Mammary epithelial cell (primary cell): ENCODE measurements at regions of chr9 and their contacts with region 1.

Region 1: DNA sequence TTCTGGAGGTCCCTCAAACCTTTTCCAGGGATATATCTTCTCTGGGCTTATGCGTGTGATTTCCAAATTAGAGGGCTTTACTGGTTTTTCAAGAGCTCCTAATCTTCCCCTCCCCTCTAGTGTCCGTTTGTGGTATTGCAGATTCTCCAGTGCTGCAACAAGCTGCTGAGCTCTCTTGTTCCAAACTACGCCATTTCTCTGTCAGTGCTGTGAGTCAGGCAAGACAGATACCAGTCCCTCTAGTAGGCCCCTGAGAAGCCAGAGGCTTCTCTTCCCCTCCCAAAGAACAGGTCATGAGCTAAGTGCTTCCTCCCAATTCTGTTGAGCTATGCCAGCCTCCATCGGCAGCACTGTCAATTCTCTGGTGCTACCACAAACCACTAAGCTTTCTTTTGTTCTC is 149.5 kb downstream of the FANCC start:
- DNase-seq: peak; percentile 81
- H3K4me3 ChIP-seq: no peak overlapping the region
- H3K27ac ChIP-seq: no peak overlapping the region
- H3K4me1 ChIP-seq: peaks cover 3% of the 10 kb centered on the region
- H3K27me3 ChIP-seq: no peaks in the 10 kb centered on the region
- CTCF ChIP-seq: peak; percentile 82 to 87

Region 2: GRCh38 chr9:94668418-94668932 is 499.5 kb before region 1 on chr9:
- CTCF ChIA-PET with region 1: interaction called, 24 read pairs
- dilution Hi-C with region 1: no loop called
- in situ Hi-C with region 1: no loop called
- intact Hi-C with region 1: no loop called
- DNase-seq: no peak
- H3K4me3 ChIP-seq: no peak overlapping the region
- H3K27ac ChIP-seq: no peak overlapping the region
- H3K4me1 ChIP-seq: peaks cover 16% of the 10 kb centered on the region
- H3K27me3 ChIP-seq: no peaks in the 10 kb centered on the region
- CTCF ChIP-seq: no peak

Region 3: DNA sequence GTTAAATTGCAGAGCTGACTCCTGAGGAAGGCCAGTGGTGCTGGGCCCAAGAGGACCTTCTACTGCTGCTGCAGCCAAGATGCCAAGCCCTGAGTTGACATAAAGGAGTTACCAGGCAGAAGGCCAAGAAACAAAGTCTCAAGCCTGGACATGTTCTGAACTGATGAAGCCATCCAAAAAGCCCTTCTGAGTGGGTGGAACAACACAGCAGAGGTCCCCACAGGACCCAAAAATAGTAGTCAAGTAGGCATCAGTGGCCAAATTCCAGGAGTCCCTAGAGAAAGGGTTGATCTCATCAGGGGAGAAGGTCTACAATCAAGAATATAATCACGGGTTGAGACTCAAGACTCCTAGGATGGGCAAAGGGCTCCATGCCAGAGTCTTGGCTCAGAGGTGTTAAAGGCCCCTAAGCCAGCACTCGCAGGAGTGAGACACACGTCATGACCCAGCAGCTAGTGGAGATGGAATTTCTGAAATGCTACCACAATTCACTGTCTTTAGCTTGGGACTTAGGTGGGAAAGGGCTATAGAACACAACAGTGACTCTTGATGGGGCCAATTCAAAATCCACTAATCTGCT is 29.8 kb after region 1 on chr9:
- CTCF ChIA-PET with region 1: no interaction called
- dilution Hi-C with region 1: no loop called
- in situ Hi-C with region 1: no loop called
- intact Hi-C with region 1: no loop called
- DNase-seq: peak; percentile 82
- H3K4me3 ChIP-seq: no peak overlapping the region
- H3K27ac ChIP-seq: peak overlapping the region; percentile 18
- H3K4me1 ChIP-seq: peaks cover 17% of the 10 kb centered on the region
- H3K27me3 ChIP-seq: no peaks in the 10 kb centered on the region
- CTCF ChIP-seq: no peak